PC-3 (cell line): ENCODE measurements at regions of chr3 and their contacts with region 1.

Region 1: DNA sequence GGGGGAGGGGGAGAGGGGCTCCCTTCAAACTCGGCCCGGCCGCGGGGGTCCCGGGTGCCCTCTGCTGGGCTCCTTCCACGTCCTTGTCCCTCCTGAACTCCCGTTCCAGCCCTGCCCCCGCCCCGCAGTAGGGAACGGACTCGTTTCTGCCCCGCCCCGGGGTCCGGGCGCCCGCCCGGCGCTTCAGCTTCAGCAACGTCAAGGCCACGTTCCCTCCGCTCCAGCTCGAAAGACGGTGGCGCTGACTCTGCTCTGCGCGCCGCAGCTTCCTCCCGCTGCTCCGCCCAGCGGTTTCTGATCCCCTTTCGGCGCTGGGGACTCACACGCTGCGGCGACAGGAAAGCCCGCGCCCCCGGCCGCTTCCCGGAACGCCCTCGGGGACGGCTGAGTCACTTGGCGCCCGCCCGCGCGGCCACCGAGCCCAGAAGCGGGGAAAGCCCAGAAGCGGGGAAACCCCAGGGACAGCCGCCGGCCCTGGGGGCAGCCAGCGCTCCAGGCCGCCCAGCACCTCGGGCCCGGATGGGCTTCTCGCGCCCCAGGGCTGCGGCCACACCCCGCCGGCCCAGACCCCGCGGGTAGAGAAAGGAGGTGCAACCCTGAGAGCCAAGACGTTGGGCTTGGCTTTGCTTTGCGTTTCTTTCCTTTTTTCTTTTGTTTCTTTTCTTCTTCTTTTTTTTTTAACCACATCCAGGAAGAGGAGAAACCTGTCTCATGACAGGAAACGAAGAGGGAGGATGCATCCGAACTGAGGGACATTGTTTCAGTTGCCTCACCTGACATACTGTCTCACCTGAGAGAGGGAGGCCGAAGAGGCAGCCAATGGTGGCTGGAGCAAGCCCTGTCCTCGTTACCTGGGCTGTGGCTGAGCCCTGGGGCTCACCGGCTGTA is 28.9 kb downstream of the ARHGAP31 start:
- DNase-seq: peak; percentile 94
- ATAC-seq: peak; percentile 85
- H3K4me3 ChIP-seq: peak overlapping the region; percentile 74
- H3K27ac ChIP-seq: peak overlapping the region; percentile 82
- H3K4me1 ChIP-seq: peaks cover 19% of the 10 kb centered on the region
- H3K27me3 ChIP-seq: no peaks in the 10 kb centered on the region
- CTCF ChIP-seq: peak; percentile 17; the same call in 1 of the 2 replicates

Region 2: GRCh38 chr3:119294696-119295445 is 28.2 kb before region 1 on chr3:
- CTCF ChIA-PET with region 1: no interaction called
- POLR2A ChIA-PET with region 1: no interaction called
- intact Hi-C with region 1: loop called (anchors 1 kb)
- DNase-seq: peak; percentile 52
- ATAC-seq: peak; percentile 29
- H3K4me3 ChIP-seq: peak overlapping the region; percentile 95
- H3K27ac ChIP-seq: peak overlapping the region; percentile 55
- H3K4me1 ChIP-seq: peaks cover 25% of the 10 kb centered on the region
- H3K27me3 ChIP-seq: no peaks in the 10 kb centered on the region
- CTCF ChIP-seq: no peak